CD4-positive, alpha-beta T cell (primary cell): ENCODE measurements at regions of chr10 and their contacts with region 1.

Region 1: GRCh38 chr10:6542999-6543430 is 37.1 kb downstream of the PRKCQ start:
- DNase-seq: peak; percentile 37 to 85 (median 58)
- ATAC-seq: peak; percentile 84
- H3K4me3 ChIP-seq: peak overlapping the region; percentile 47
- H3K4me3 Mint-ChIP-seq: peak overlapping the region; percentile 89
- H3K27ac ChIP-seq: peak overlapping the region; percentile 86 to 88
- H3K27ac Mint-ChIP-seq: peak overlapping the region; percentile 97
- H3K4me1 ChIP-seq: peaks cover 73% of the 10 kb centered on the region
- H3K4me1 Mint-ChIP-seq: peaks cover 86% of the 10 kb centered on the region
- H3K27me3 ChIP-seq: no peaks in the 10 kb centered on the region
- H3K27me3 Mint-ChIP-seq: no peaks in the 10 kb centered on the region
- CTCF ChIP-seq: no peak

Region 2: DNA sequence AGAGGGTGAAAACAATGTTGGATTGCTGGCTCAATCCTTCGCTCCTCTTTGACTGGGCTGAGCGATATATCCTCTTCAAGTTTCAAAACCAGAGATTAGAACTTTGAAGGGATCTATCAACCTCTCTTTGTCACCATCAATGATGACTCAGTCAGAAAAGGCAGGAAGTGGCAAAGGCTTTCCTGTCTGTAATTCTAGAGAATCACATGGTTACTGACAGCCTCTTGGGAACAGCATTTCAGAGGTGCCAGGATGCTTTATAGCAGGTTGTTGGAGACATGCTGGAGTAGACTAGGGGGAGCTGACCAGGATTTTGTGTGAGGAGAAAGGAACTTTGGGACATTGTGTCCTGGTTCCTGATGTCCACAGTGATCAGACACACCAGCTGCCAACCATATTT is 44.2 kb before region 1 on chr10:
- CTCF ChIA-PET with region 1: interaction called, 3 read pairs
- POLR2A ChIA-PET with region 1: interaction called, 15 read pairs
- intact Hi-C with region 1: loop called (anchors 2 to 5 kb)
- DNase-seq: peak in 8 of 14 experiments; percentile 17 to 91 (median 47)
- ATAC-seq: peak; percentile 75
- H3K4me3 ChIP-seq: no peak overlapping the region
- H3K4me3 Mint-ChIP-seq: peak overlapping the region; percentile 55
- H3K27ac ChIP-seq: peak overlapping the region; percentile 55 to 63
- H3K27ac Mint-ChIP-seq: peak overlapping the region; percentile 90
- H3K4me1 ChIP-seq: peaks cover 41% of the 10 kb centered on the region
- H3K4me1 Mint-ChIP-seq: peaks cover 42% of the 10 kb centered on the region
- H3K27me3 ChIP-seq: no peaks in the 10 kb centered on the region
- H3K27me3 Mint-ChIP-seq: no peaks in the 10 kb centered on the region
- CTCF ChIP-seq: no peak

Region 3: DNA sequence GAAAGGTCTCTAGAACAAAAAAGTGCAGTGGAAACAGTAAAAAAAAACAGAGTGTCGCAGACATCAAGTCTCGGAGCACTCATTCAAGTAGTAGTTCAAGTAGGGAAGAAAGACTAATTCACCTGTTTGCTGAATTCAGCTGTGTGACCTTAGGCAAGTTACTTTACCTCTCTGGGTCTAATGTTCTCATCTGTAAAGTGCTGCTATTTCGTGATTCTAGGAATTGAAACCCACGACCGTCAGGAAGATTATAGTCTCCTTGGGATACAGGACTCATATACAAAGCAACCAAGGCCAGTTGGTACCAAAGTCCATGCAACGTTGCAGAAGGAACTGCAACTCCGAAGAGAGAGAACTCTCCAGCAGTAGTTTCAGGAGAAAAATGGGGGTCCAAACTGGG is 10.9 kb after region 1 on chr10:
- CTCF ChIA-PET with region 1: interaction called, 17 read pairs
- POLR2A ChIA-PET with region 1: interaction called, 38 read pairs
- intact Hi-C with region 1: loop called in 1 of 2 experiments (anchors 1 kb)
- DNase-seq: no peak
- ATAC-seq: no peak
- H3K4me3 ChIP-seq: no peak overlapping the region
- H3K4me3 Mint-ChIP-seq: no peak overlapping the region
- H3K27ac ChIP-seq: peak overlapping the region in 1 of 2 donors; percentile 7
- H3K27ac Mint-ChIP-seq: peak overlapping the region; percentile 81
- H3K4me1 ChIP-seq: peaks cover 49% of the 10 kb centered on the region
- H3K4me1 Mint-ChIP-seq: peaks cover 86% of the 10 kb centered on the region
- H3K27me3 ChIP-seq: no peaks in the 10 kb centered on the region
- H3K27me3 Mint-ChIP-seq: no peaks in the 10 kb centered on the region
- CTCF ChIP-seq: no peak

Region 4: GRCh38 chr10:6593241-6593671 is 50.2 kb after region 1 on chr10:
- CTCF ChIA-PET with region 1: no interaction called
- POLR2A ChIA-PET with region 1: interaction called, 20 read pairs
- intact Hi-C with region 1: no loop called
- DNase-seq: peak in 5 of 14 experiments; percentile 16 to 64 (median 50)
- ATAC-seq: peak; percentile 67
- H3K4me3 ChIP-seq: no peak overlapping the region
- H3K4me3 Mint-ChIP-seq: peak overlapping the region; percentile 66
- H3K27ac ChIP-seq: peak overlapping the region; percentile 79 to 83
- H3K27ac Mint-ChIP-seq: peak overlapping the region; percentile 94
- H3K4me1 ChIP-seq: peaks cover 54% of the 10 kb centered on the region
- H3K4me1 Mint-ChIP-seq: peaks cover 97% of the 10 kb centered on the region
- H3K27me3 ChIP-seq: no peaks in the 10 kb centered on the region
- H3K27me3 Mint-ChIP-seq: no peaks in the 10 kb centered on the region
- CTCF ChIP-seq: no peak